Activated CD4-positive, alpha-beta T cell treated with anti-CD3 and anti-CD28 coated beads, Interleukin-2, amount 10 ng/mL, durations not matched to agents 24 days and 14 days (primary cell): ENCODE measurements at regions of chr14 and their contacts with region 1.

Region 1: GRCh38 chr14:65604936-65605335 is 192.4 kb downstream of the FUT8 start:
- DNase-seq: no peak
- H3K4me3 Mint-ChIP-seq: no peak overlapping the region
- H3K27ac Mint-ChIP-seq: no peak overlapping the region
- H3K4me1 Mint-ChIP-seq: peaks cover 4% of the 10 kb centered on the region
- H3K27me3 Mint-ChIP-seq: no peaks in the 10 kb centered on the region

Region 2: GRCh38 chr14:65117769-65118701 is 486.9 kb before region 1 on chr14:
- intact Hi-C with region 1: no loop called
- DNase-seq: no peak
- H3K4me3 Mint-ChIP-seq: no peak overlapping the region
- H3K27ac Mint-ChIP-seq: no peak overlapping the region
- H3K4me1 Mint-ChIP-seq: peaks cover 2% of the 10 kb centered on the region
- H3K27me3 Mint-ChIP-seq: peaks cover 10% of the 10 kb centered on the region

Region 3: DNA sequence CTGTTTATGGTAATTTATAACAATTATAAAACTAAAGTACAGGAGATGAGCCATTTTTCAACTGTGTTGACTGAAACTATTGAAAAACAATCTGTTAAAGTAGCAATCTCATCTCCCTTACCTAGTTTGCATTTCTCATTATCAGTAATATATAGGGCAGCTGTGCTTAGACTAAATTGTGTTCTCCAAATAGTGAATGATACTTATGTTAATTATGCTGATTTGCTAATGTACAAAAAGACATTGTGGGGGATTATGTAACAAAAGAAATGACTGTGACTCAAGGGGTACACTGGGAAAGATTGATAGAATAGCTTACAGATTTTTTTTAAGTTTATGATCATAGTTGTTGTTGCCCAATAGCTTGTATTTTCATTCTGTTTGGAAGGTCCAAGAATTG is 15.3 kb after region 1 on chr14:
- intact Hi-C with region 1: loop called (anchors 1 kb)
- DNase-seq: no peak
- H3K4me3 Mint-ChIP-seq: no peak overlapping the region
- H3K27ac Mint-ChIP-seq: no peak overlapping the region
- H3K4me1 Mint-ChIP-seq: peaks cover 2% of the 10 kb centered on the region
- H3K27me3 Mint-ChIP-seq: no peaks in the 10 kb centered on the region